ENCODE measurements at regions of chrX and their contacts with region 1.

Region 1: DNA sequence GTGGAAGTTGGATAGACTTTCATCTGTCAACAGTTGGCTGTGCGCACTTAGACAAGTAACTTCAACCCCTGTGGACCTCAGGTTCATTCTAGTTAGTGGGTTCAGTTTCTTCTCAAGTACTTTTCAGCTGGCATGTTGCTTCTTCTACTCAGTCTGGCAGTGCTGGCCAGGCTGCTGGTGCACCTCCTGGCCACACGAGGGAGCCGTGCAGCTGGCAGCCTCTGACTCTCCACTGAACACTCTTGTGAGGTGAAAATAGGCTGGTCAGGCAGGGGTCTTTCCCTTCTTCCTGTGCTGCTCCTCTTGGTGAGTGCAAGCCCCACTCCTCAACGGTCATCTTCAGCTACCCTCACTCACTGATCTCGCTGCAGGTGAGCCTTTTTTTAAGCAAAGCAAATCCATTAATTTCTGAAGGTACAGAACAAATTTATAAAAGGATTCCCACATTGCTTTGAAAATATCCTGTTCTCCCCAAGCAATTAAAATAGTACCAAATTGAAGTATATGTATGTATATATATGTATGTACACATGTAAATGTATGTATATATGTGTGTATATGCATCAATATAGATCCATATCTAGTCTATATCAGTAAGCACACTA is 30.6 kb downstream of the LONRF3 start:
- DNase-seq: peak; percentile 45
- H3K4me3 Mint-ChIP-seq: no peak overlapping the region
- H3K27ac Mint-ChIP-seq: no peak overlapping the region
- H3K4me1 Mint-ChIP-seq: no peaks in the 10 kb centered on the region
- H3K27me3 Mint-ChIP-seq: peaks cover 40% of the 10 kb centered on the region
- CTCF ChIP-seq: peak; percentile 90

Region 2: DNA sequence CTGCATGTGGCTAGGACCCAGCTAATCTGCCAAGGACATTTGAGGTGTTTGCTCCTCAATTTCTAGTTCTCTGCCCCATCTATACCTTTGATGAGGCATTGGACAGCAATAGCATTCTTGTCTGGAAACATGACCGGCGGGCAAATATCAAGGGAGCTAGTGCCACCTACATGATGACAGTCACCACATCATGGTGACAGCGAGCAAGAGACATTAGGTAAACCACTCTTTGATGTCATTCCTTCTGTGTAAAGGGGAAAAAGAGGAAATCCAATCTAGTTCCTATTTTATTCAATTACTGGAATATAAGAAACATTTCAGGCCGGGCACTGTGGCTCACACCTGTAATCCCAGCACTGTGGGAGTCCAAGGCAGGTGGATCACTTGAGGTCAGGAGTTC is 298.4 kb before region 1 on chrX:
- CTCF ChIA-PET with region 1: no interaction called
- POLR2A ChIA-PET with region 1: no interaction called
- intact Hi-C with region 1: no loop called
- DNase-seq: no peak
- H3K4me3 Mint-ChIP-seq: no peak overlapping the region
- H3K27ac Mint-ChIP-seq: no peak overlapping the region
- H3K4me1 Mint-ChIP-seq: no peaks in the 10 kb centered on the region
- H3K27me3 Mint-ChIP-seq: peaks cover 37% of the 10 kb centered on the region
- CTCF ChIP-seq: no peak

Region 3: GRCh38 chrX:118847676-118848075 is 157.3 kb before region 1 on chrX:
- CTCF ChIA-PET with region 1: interaction called, 29 read pairs
- POLR2A ChIA-PET with region 1: no interaction called
- intact Hi-C with region 1: loop called (anchors 1 kb)
- DNase-seq: peak; percentile 68
- H3K4me3 Mint-ChIP-seq: no peak overlapping the region
- H3K27ac Mint-ChIP-seq: no peak overlapping the region
- H3K4me1 Mint-ChIP-seq: no peaks in the 10 kb centered on the region
- H3K27me3 Mint-ChIP-seq: peaks cover 36% of the 10 kb centered on the region
- CTCF ChIP-seq: peak; percentile 55

Region 4: DNA sequence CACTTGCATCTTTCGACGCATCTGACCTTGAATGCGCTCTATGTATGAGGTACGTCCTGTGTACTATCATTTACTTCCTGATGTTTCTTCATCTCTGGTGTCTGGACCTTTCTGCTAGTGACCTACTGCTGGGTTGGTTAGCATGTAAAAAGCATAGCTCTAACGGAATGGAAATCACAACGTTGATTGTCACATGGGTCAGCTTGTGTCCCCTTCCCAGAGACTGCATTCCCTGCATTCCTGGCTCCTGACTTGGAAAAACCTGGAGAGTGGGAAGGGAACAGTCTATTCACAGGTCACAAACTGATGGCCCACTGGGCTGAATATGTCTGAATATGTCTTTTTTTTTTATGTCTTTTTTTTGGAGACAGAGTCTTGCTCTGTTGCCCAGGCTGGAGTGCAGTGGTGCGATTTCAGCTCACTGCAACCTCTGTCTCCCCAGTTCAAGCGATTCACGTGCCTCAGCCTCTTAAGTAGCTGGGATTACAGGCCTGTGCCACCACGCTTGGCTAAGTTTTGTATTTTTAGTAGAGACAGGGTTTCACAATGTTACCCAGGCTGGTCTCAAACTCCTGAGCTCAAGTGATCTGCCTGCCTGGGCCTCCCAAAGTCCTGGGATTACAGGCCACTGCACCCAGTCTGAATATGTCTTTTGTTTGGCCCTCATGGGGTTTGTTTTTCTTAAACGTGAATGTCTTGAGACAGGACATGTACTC is 14.4 kb before region 1 on chrX:
- CTCF ChIA-PET with region 1: interaction called, 12 read pairs
- POLR2A ChIA-PET with region 1: no interaction called
- intact Hi-C with region 1: no loop called
- DNase-seq: no peak
- H3K4me3 Mint-ChIP-seq: no peak overlapping the region
- H3K27ac Mint-ChIP-seq: no peak overlapping the region
- H3K4me1 Mint-ChIP-seq: no peaks in the 10 kb centered on the region
- H3K27me3 Mint-ChIP-seq: peaks cover 42% of the 10 kb centered on the region
- CTCF ChIP-seq: no peak

Region 5: DNA sequence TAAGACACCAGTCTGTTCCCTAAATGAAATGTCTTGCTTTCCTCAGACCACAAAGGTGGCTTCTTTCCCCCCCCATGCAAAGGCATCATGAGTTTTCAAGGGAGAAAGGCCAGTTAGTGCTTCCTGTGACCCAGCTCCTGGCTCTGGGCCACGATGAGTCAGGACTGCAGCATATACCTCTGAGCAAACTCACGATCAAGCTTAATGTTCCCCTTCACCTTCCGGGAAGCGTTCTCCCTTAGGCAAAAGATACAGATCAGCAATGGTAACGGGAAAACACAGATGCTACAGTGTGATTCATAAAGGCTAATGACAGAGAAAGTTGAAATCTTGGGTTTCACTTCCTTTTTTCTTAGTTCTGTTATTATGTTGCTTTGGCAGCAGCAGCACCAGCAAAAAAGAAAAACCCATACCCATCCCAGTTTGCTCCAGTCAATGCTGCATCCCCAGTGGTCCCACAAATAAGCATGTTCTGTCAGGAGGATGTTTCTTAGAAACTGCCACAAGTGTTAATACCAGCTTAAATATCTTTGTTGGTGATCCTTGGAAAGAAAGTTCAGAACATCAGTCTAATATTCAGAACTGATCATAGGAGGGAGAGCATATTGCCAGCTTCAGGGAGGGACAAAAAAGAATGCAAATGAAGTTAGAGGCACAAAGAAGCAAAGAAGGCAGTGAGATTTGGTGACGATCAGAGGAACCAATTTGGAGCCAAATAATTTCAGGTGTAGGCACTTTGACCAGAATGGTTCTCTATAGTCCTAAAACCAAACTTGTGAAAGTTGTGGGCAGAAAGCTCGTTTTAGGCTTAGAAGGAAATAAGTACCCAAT is 10.6 kb after region 1 on chrX:
- CTCF ChIA-PET with region 1: interaction called, 16 read pairs
- POLR2A ChIA-PET with region 1: interaction called, 3 read pairs
- intact Hi-C with region 1: no loop called
- DNase-seq: peak; percentile 96
- H3K4me3 Mint-ChIP-seq: no peak overlapping the region
- H3K27ac Mint-ChIP-seq: peak overlapping the region; percentile 74
- H3K4me1 Mint-ChIP-seq: peaks cover 11% of the 10 kb centered on the region
- H3K27me3 Mint-ChIP-seq: no peaks in the 10 kb centered on the region
- CTCF ChIP-seq: no peak

Region 6: DNA sequence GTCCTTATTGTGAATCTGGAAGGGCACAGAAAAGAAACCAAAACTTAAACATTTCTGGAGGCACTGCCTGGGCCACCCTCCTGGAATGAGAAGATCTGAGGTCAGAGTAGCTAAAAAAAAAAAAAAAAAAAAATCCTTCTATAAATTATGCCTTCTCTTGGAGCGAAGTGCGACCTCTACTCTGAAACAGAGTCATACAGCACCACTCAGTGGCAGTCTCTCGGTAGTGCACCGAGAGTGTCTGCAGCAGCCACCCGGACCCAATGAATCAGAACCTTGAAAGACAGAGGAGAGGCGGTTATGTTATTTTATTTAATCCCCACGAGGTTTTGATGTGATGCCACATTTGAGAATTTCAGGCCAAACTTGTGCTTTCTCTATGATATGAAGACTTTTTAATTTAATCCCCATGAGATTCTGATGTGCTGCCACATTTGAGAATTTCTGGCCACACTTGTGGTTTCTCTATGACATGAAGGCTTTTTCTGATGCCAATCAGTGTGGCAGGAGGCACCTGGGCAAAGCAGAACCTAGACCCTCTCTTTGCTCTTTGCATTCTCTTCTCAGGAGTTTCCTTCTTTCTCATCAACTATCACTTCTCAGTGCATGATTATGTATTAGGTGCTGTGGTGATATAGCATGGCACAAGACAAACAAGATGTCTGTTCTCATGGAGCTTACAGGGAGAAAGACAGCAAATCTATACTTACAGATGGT is 62.2 kb after region 1 on chrX:
- CTCF ChIA-PET with region 1: interaction called, 41 read pairs
- POLR2A ChIA-PET with region 1: no interaction called
- intact Hi-C with region 1: loop called (anchors 1 kb)
- DNase-seq: peak; percentile 65
- H3K4me3 Mint-ChIP-seq: no peak overlapping the region
- H3K27ac Mint-ChIP-seq: no peak overlapping the region
- H3K4me1 Mint-ChIP-seq: no peaks in the 10 kb centered on the region
- H3K27me3 Mint-ChIP-seq: peaks cover 25% of the 10 kb centered on the region
- CTCF ChIP-seq: peak; percentile 66

Region 7: DNA sequence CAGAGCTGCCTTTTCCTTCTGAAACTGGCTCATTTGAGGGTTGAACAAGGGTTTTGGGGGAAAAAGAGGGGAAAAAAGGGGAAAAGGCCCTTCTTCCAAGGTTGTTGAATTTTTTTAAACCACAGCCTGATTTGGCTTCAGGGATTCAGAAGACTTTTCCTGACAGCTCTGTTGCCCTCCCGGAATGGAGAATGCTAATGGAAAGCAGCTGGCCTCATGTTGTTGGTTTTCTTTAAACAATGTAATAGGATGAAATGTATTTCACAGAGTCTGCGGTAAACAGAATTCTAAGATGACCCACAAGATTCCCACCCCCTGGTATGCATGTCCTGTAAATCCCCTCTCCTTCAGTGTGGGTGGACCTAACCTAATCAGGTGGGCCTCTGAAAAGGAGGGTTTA is 125.9 kb after region 1 on chrX:
- CTCF ChIA-PET with region 1: no interaction called
- POLR2A ChIA-PET with region 1: no interaction called
- intact Hi-C with region 1: no loop called
- DNase-seq: no peak
- H3K4me3 Mint-ChIP-seq: no peak overlapping the region
- H3K27ac Mint-ChIP-seq: no peak overlapping the region
- H3K4me1 Mint-ChIP-seq: no peaks in the 10 kb centered on the region
- H3K27me3 Mint-ChIP-seq: peaks cover 76% of the 10 kb centered on the region
- CTCF ChIP-seq: no peak

Region 8: DNA sequence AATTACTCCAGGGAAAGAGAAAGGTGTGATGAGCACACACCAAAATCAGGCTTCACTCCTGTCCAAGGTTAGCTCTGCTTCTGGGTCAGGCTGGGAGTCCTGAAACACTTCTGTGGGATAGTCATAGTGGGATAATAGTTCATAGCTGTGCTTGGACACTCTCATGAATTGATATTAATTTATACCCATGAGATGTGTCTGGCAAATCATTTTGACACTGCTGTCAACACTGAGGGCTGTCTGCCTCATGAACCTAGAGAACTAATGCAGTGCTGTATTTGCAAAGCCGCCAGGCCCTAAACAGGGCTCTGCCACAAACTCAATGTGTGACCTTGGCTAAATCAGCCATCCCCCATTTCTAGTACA is 206.6 kb after region 1 on chrX:
- CTCF ChIA-PET with region 1: interaction called, 4 read pairs
- POLR2A ChIA-PET with region 1: no interaction called
- intact Hi-C with region 1: loop called (anchors 10 kb)
- DNase-seq: no peak
- H3K4me3 Mint-ChIP-seq: no peak overlapping the region
- H3K27ac Mint-ChIP-seq: no peak overlapping the region
- H3K4me1 Mint-ChIP-seq: no peaks in the 10 kb centered on the region
- H3K27me3 Mint-ChIP-seq: peaks cover 55% of the 10 kb centered on the region
- CTCF ChIP-seq: no peak

Region 9: GRCh38 chrX:120477453-120477852 is 1472.4 kb after region 1 on chrX:
- CTCF ChIA-PET with region 1: no interaction called
- POLR2A ChIA-PET with region 1: no interaction called
- intact Hi-C with region 1: no loop called
- DNase-seq: no peak
- H3K4me3 Mint-ChIP-seq: no peak overlapping the region
- H3K27ac Mint-ChIP-seq: no peak overlapping the region
- H3K4me1 Mint-ChIP-seq: no peaks in the 10 kb centered on the region
- H3K27me3 Mint-ChIP-seq: peaks cover 13% of the 10 kb centered on the region
- CTCF ChIP-seq: no peak

Measured in MCF 10A (cell line).